Activated naive CD4-positive, alpha-beta T cell treated with anti-CD3 and anti-CD28 coated beads for 36 hours (primary cell): ENCODE measurements at regions of chr4 and their contacts with region 1.

Region 1: DNA sequence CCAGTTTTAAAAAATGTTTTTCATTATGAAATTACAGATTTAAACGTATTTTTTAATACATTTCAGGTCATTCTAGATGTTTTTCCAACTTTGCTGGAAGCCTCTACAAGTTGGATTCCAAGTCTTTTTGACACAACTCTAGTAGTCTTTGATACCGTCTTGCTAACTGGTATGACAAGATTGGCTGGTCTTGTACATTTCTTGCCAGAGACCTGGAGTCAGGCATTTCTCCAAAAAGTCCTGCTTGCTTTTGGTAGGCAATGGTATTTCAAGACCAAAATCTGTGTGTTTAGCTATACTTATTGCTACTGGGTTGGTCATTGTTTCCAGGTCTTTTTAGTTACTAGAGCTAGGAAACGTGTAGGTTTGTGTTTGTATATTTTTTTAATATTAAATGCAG is 64.6 kb downstream of the SLAIN2 start:
- DNase-seq: no peak
- H3K4me3 Mint-ChIP-seq: no peak overlapping the region
- H3K27ac Mint-ChIP-seq: no peak overlapping the region
- H3K4me1 Mint-ChIP-seq: peaks cover 11% of the 10 kb centered on the region
- H3K27me3 Mint-ChIP-seq: no peaks in the 10 kb centered on the region

Region 2: GRCh38 chr4:48047421-48047844 is 358.5 kb before region 1 on chr4:
- CTCF ChIA-PET with region 1: no interaction called
- intact Hi-C with region 1: no loop called
- DNase-seq: peak; percentile 91
- H3K4me3 Mint-ChIP-seq: peak overlapping the region; percentile 1
- H3K27ac Mint-ChIP-seq: no peak overlapping the region
- H3K4me1 Mint-ChIP-seq: peaks cover 58% of the 10 kb centered on the region
- H3K27me3 Mint-ChIP-seq: no peaks in the 10 kb centered on the region

Region 3: GRCh38 chr4:48388525-48389154 is 17.3 kb before region 1 on chr4:
- CTCF ChIA-PET with region 1: interaction called, 3 read pairs
- intact Hi-C with region 1: loop called (anchors 2 kb)
- DNase-seq: no peak
- H3K4me3 Mint-ChIP-seq: no peak overlapping the region
- H3K27ac Mint-ChIP-seq: no peak overlapping the region
- H3K4me1 Mint-ChIP-seq: no peaks in the 10 kb centered on the region
- H3K27me3 Mint-ChIP-seq: no peaks in the 10 kb centered on the region